Naive thymus-derived CD4-positive, alpha-beta T cell (primary cell): ENCODE measurements at regions of chr16 and their contacts with region 1.

Region 1: DNA sequence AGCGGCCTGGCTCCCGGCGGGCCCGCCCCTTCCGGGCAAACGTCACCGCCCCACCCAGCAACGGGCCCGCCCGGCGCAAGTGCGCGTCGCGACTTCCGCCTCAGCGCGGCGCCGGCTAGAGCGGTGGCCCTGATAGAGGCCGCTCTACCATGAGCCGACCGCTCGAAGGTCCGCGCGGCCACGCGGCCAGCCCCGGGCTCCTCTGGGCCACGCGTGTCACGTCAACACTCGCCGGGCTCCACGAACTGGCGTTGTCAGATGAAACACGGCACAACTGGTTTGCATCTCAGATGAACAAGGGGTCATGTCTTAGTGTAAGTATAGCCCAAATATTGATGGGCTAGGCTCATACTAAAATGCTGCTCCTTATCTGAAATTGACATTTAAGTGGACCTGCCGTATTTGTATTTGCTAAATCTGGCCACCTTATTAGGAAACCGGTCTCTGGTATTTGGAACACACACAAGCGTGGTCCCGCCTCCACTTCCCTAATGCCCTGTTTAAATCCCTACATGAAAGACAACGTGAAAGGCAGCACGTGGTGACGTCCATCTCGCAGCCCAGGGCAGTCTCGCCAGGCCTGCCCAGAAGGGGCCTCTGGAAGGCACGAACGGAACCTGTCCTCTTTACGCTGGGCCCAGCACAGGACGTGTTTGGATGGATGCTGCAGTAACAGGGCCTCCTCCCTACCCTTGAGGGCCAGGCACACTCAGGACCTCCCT is at the start of gene ZNF598:
- DNase-seq: peak; percentile 64 to 87 (median 78)
- ATAC-seq: peak; percentile 97
- H3K4me3 ChIP-seq: peak within 1 kb of the TSS; percentile 77
- H3K4me3 Mint-ChIP-seq: peak within 1 kb of the TSS; percentile 87 to 94 (median 92)
- H3K27ac ChIP-seq: peak within 1 kb of the TSS; percentile 91
- H3K27ac Mint-ChIP-seq: peak within 1 kb of the TSS; percentile 85 to 99 (median 97)
- H3K4me1 ChIP-seq: peaks cover 26 to 29% of the 10 kb centered on the region in 2 donors
- H3K4me1 Mint-ChIP-seq: peaks cover 22 to 39% (median 32%) of the 10 kb centered on the region in 7 donors
- H3K27me3 ChIP-seq: no peaks in the 10 kb centered on the region
- H3K27me3 Mint-ChIP-seq: no peaks in the 10 kb centered on the region
- total RNA-seq, gene ZNF598: 44.3 to 63.2 (median 49.8) TPM

Region 2: GRCh38 chr16:1942810-1943726 is 66.9 kb before region 1 on chr16 and contains the start of gene MSRB1:
- CTCF ChIA-PET with region 1: no interaction called
- POLR2A ChIA-PET with region 1: no interaction called
- intact Hi-C with region 1: no loop called
- DNase-seq: peak; percentile 97 to 100 (median 98)
- ATAC-seq: peak; percentile 100
- H3K4me3 ChIP-seq: peak within 1 kb of the TSS; percentile 90
- H3K4me3 Mint-ChIP-seq: peak within 1 kb of the TSS; percentile 74 to 90 (median 87)
- H3K27ac ChIP-seq: peak within 1 kb of the TSS; percentile 76
- H3K27ac Mint-ChIP-seq: peak within 1 kb of the TSS; percentile 41 to 90 (median 65)
- H3K4me1 ChIP-seq: peaks cover 6 to 7% of the 10 kb centered on the region in 2 donors
- H3K4me1 Mint-ChIP-seq: peaks cover 4 to 24% (median 11%) of the 10 kb centered on the region in 7 donors
- H3K27me3 ChIP-seq: no peaks in the 10 kb centered on the region
- H3K27me3 Mint-ChIP-seq: no peaks in the 10 kb centered on the region
- total RNA-seq, gene MSRB1: 5.5 to 27.0 (median 8.2) TPM

Region 3: GRCh38 chr16:1977895-1978268 is 32.1 kb before region 1 on chr16:
- CTCF ChIA-PET with region 1: no interaction called
- POLR2A ChIA-PET with region 1: no interaction called
- intact Hi-C with region 1: no loop called
- DNase-seq: no peak
- ATAC-seq: no peak
- H3K4me3 ChIP-seq: no peak overlapping the region
- H3K4me3 Mint-ChIP-seq: peak overlapping the region in 1 of 10 donors; percentile 52
- H3K27ac ChIP-seq: no peak overlapping the region
- H3K27ac Mint-ChIP-seq: no peak overlapping the region
- H3K4me1 ChIP-seq: peaks cover under 1 to 3% of the 10 kb centered on the region in 2 donors
- H3K4me1 Mint-ChIP-seq: peaks cover 2 to 16% (median 5%) of the 10 kb centered on the region in 7 donors
- H3K27me3 ChIP-seq: peaks cover 0 to 3% of the 10 kb centered on the region in 2 donors
- H3K27me3 Mint-ChIP-seq: peaks cover 0 to 27% (median 6%) of the 10 kb centered on the region in 5 donors

Region 4: GRCh38 chr16:1991948-1992703 is 17.8 kb before region 1 on chr16:
- CTCF ChIA-PET with region 1: no interaction called
- POLR2A ChIA-PET with region 1: interaction called, 30 read pairs
- intact Hi-C with region 1: loop called (anchors 1 kb)
- DNase-seq: peak; percentile 85 to 98 (median 92)
- ATAC-seq: peak; percentile 95
- H3K4me3 ChIP-seq: peak overlapping the region; percentile 39
- H3K4me3 Mint-ChIP-seq: peak overlapping the region in 9 of 10 donors; percentile 45 to 82 (median 75)
- H3K27ac ChIP-seq: peak overlapping the region; percentile 54
- H3K27ac Mint-ChIP-seq: peak overlapping the region in 7 of 9 donors; percentile 22 to 82 (median 62)
- H3K4me1 ChIP-seq: peaks cover 15 to 16% of the 10 kb centered on the region in 2 donors
- H3K4me1 Mint-ChIP-seq: peaks cover 5 to 33% (median 22%) of the 10 kb centered on the region in 7 donors
- H3K27me3 ChIP-seq: peaks cover 0 to 3% of the 10 kb centered on the region in 2 donors
- H3K27me3 Mint-ChIP-seq: peaks cover 8 to 14% (median 10%) of the 10 kb centered on the region in 5 donors

Region 5: GRCh38 chr16:2082160-2082982 is 72.4 kb after region 1 on chr16:
- CTCF ChIA-PET with region 1: no interaction called
- POLR2A ChIA-PET with region 1: no interaction called
- intact Hi-C with region 1: no loop called
- DNase-seq: no peak
- ATAC-seq: no peak
- H3K4me3 ChIP-seq: no peak overlapping the region
- H3K4me3 Mint-ChIP-seq: no peak overlapping the region
- H3K27ac ChIP-seq: no peak overlapping the region
- H3K27ac Mint-ChIP-seq: peak overlapping the region in 1 of 9 donors; percentile 57
- H3K4me1 ChIP-seq: no peaks in the 10 kb centered on the region
- H3K4me1 Mint-ChIP-seq: peaks cover 0 to 2% (median 0%) of the 10 kb centered on the region in 7 donors
- H3K27me3 ChIP-seq: no peaks in the 10 kb centered on the region
- H3K27me3 Mint-ChIP-seq: no peaks in the 10 kb centered on the region